ENCODE measurements at regions of chr3 and their contacts with region 1.

Region 1: DNA sequence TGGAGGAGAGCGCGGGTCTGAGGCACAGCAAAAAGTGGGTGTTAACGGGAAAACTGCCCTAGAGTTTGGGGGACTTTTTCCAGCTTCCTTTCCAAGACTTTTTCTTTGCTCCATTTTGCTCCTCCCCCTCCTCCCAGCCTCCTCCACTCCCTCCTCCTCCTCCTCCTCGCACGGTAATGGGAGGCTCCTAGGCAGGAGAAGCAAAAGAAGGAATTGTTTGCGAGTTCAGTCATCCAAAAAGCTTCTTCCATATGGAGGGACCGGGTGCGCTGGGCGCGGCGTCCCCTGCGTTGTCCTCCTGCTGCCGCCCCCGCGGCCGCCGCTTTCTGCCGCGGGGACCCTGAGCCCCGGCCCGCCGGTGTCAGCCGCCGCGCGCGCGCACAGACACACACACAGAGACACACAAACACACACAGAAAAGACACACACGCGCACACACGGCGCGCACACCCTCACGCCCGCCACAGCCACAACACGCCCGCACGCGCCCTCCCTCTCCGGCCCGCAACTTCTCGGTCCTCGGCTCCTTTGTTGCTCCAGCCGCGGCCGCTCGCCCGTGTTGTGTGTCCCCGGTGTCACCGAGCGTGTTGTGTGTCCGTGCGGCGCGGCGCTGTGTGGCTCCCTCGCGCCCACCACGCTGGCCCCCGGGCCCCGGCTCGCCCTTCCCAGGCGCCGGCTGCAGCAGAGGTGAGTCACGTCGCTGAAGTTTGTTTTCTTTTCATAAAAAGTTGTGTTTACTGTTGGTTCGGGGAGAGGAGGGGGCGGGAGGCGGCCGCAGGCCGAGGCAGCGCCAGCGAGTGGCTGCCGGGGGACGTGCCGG is at the start of gene BOC:
- DNase-seq: peak; percentile 55 to 83
- ATAC-seq: peak; percentile 82
- H3K4me3 ChIP-seq: peak within 1 kb of the TSS; percentile 67 to 70
- H3K27ac ChIP-seq: peak within 1 kb of the TSS in 1 of 2 donors; percentile 16
- H3K4me1 ChIP-seq: no peaks in the 10 kb centered on the region
- H3K27me3 ChIP-seq: no peaks in the 10 kb centered on the region
- total RNA-seq, gene BOC: 45.1 to 164 TPM

Region 2: GRCh38 chr3:113166719-113167492 is 44.6 kb before region 1 on chr3:
- intact Hi-C with region 1: loop called in 1 of 2 experiments (anchors 5 kb)
- DNase-seq: peak in 1 of 2 donors; percentile 55
- ATAC-seq: peak; percentile 60
- H3K4me3 ChIP-seq: no peak overlapping the region
- H3K27ac ChIP-seq: peak overlapping the region; percentile 6 to 64
- H3K4me1 ChIP-seq: peaks cover 0 to 6% of the 10 kb centered on the region in 2 donors
- H3K27me3 ChIP-seq: no peaks in the 10 kb centered on the region

Region 3: DNA sequence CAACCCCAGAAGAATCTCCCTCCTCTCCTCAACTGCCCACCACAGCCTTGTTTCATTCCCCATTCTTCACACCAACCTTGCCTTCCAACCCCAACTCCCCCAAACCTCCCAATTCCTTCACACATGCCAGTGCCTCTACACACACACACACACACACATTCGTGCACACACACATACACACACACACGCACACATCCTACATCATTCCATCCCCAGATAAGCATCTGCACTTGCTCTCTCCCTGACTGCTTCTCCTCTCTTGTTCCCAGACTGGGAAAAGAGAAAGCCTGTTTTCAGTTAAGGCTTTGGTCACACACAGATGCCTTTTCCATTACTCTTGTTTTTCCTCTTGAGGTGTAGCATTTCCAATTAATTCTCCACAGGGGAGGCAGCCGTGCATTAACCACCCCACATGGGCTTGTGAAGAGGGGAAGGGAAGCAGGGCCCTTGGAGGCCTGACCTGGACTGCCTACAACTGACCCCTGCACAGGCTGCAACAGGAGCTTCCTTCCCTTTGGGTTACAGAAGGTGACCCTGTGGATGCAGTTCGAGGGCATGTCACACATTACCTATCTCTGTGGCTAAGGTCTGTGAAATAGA is 32.2 kb before region 1 on chr3:
- intact Hi-C with region 1: no loop called
- DNase-seq: no peak
- ATAC-seq: no peak
- H3K4me3 ChIP-seq: no peak overlapping the region
- H3K27ac ChIP-seq: no peak overlapping the region
- H3K4me1 ChIP-seq: no peaks in the 10 kb centered on the region
- H3K27me3 ChIP-seq: no peaks in the 10 kb centered on the region

Region 4: DNA sequence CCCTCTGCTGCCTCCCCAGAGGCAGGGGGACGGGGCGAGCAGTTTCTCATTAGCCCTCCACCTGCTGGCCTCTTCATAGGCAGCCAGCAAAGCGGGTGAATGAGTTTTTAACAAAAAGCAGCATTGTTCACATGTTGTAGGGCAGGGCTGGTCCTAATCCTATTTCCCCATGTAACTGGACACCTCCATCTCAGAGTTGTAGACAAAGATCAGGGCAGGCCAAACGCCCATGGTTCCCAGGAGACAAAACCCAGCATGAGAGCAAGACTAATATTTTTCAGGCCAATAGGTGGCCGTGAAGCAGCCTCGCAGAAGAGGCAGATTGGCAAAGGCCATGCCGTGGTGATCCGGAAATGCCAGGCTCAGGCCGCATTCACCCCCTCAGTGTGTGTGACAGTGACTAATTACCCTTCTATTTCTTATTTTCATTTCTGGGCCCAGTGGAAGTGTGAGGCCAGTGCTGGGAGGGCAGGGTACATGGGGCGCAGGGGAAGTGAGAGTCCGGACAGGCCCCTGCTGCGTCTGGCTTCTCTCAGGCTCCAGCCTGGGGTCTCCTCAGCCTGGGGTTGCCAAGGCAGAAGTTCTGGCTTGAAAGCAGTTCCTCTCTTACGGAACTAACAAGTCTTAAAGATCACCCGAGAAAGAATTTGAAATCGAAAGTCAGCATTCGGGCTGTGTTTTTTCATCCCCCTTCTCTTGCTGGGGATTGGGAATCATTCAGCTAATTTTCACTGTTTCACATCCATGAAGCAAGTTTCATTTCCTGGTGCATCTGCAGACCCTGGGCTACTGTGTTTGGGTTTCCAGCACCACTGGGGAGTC is 64.6 kb after region 1 on chr3:
- intact Hi-C with region 1: loop called (anchors 5 kb)
- DNase-seq: peak in 1 of 2 donors; percentile 78
- ATAC-seq: peak; percentile 37
- H3K4me3 ChIP-seq: no peak overlapping the region
- H3K27ac ChIP-seq: peak overlapping the region; percentile 24 to 88
- H3K4me1 ChIP-seq: no peaks in the 10 kb centered on the region
- H3K27me3 ChIP-seq: no peaks in the 10 kb centered on the region